ENCODE measurements at regions of chr13 and their contacts with region 1.

Region 1: GRCh38 chr13:97809576-97809975 is 143.9 kb upstream of the IPO5 start:
- DNase-seq: no peak
- ATAC-seq: no peak
- H3K4me3 ChIP-seq: no peak overlapping the region
- H3K27ac ChIP-seq: no peak overlapping the region
- H3K4me1 ChIP-seq: peaks cover 0 to 8% of the 10 kb centered on the region in 2 experiments; a peak in 2 of 4 replicates
- H3K27me3 ChIP-seq: no peaks in the 10 kb centered on the region
- CTCF ChIP-seq: no peak
- POLR2A ChIP-seq: no peak
- RAD21 ChIP-seq: no peak

Region 2: DNA sequence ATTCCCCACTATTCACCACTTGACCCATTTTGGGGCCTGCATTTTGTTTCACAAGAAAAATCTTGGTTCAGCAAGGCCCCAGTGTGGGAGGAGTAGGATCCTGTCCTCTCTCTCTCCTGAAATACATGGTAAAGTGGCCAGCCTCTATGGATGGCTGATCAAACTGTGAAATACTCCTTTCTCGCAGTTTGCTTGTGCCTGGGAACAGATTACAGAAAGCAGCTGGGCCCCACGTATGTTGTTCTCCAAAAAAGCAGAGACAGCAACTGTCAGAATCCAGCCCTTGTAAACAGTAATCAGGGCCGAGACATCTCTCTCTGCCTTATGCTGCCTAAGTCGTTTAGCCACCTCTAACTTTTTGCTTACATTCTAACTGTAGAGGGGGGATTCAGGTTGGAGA is 436.6 kb before region 1 on chr13:
- CTCF ChIA-PET with region 1: no interaction called
- POLR2A ChIA-PET with region 1: no interaction called
- RAD21 ChIA-PET with region 1: no interaction called
- intact Hi-C with region 1: loop called (anchors 10 kb)
- DNase-seq: no peak
- ATAC-seq: no peak
- H3K4me3 ChIP-seq: no peak overlapping the region
- H3K27ac ChIP-seq: no peak overlapping the region
- H3K4me1 ChIP-seq: no peaks in the 10 kb centered on the region
- H3K27me3 ChIP-seq: no peaks in the 10 kb centered on the region
- CTCF ChIP-seq: no peak
- POLR2A ChIP-seq: no peak
- RAD21 ChIP-seq: no peak

Region 3: DNA sequence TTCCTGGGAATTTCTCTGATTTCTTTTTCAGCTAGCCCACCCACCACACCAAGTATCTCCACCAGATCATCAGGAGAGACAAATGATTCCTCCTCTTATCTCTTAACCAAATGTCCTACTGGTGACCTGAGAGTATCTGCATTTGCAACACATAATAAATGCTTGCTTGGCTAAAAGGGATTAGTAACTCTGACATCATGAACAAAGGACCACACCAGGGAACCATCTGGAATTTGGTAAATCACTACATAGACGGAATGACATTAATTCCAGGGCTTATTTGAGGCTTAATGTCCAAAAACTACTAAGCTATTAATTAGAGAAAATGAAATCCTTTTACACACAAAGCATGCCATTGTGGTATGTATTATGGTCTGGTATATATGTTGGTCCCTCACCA is 236.6 kb before region 1 on chr13:
- CTCF ChIA-PET with region 1: no interaction called
- POLR2A ChIA-PET with region 1: no interaction called
- RAD21 ChIA-PET with region 1: no interaction called
- intact Hi-C with region 1: no loop called
- DNase-seq: no peak
- ATAC-seq: no peak
- H3K4me3 ChIP-seq: no peak overlapping the region
- H3K27ac ChIP-seq: no peak overlapping the region
- H3K4me1 ChIP-seq: peaks cover 13 to 14% of the 10 kb centered on the region in 2 experiments
- H3K27me3 ChIP-seq: no peaks in the 10 kb centered on the region
- CTCF ChIP-seq: no peak
- POLR2A ChIP-seq: no peak
- RAD21 ChIP-seq: no peak

Region 4: DNA sequence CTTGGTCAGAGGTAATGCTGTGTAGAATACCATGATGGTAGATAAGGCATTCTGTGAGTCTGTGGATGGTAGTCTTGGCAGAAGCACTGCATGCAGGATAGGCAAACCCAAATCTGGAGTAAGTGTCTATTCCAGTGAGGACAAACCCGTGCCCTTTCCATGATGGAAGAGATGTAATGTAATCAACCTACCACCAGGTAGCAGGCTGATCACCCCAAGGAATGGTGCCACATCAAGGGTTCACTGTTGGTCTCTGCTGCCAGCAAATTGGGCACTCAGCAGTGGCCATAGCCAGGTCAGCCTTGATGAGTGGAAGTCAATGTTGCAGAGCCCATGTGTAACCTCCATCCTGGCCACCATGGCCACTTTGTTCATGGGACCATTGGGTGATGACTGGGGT is 220.6 kb before region 1 on chr13:
- CTCF ChIA-PET with region 1: no interaction called
- POLR2A ChIA-PET with region 1: no interaction called
- RAD21 ChIA-PET with region 1: no interaction called
- intact Hi-C with region 1: loop called (anchors 10 kb)
- DNase-seq: no peak
- ATAC-seq: 0 out of 2 replicates have a peak, but pooled peaks have one; percentile 40
- H3K4me3 ChIP-seq: no peak overlapping the region
- H3K27ac ChIP-seq: no peak overlapping the region
- H3K4me1 ChIP-seq: no peaks in the 10 kb centered on the region
- H3K27me3 ChIP-seq: no peaks in the 10 kb centered on the region
- CTCF ChIP-seq: peak in 2 of 3 experiments; percentile 7 to 12; a peak in 2 of 6 replicates
- POLR2A ChIP-seq: no peak
- RAD21 ChIP-seq: peak; percentile 29; the same call in 1 of the 2 replicates

Region 5: GRCh38 chr13:97986835-97987234 is 177.3 kb after region 1 on chr13:
- CTCF ChIA-PET with region 1: no interaction called
- POLR2A ChIA-PET with region 1: no interaction called
- RAD21 ChIA-PET with region 1: no interaction called
- intact Hi-C with region 1: no loop called
- DNase-seq: no peak
- ATAC-seq: no peak
- H3K4me3 ChIP-seq: no peak overlapping the region
- H3K27ac ChIP-seq: no peak overlapping the region
- H3K4me1 ChIP-seq: no peaks in the 10 kb centered on the region
- H3K27me3 ChIP-seq: no peaks in the 10 kb centered on the region
- CTCF ChIP-seq: no peak
- POLR2A ChIP-seq: no peak
- RAD21 ChIP-seq: no peak

Region 6: DNA sequence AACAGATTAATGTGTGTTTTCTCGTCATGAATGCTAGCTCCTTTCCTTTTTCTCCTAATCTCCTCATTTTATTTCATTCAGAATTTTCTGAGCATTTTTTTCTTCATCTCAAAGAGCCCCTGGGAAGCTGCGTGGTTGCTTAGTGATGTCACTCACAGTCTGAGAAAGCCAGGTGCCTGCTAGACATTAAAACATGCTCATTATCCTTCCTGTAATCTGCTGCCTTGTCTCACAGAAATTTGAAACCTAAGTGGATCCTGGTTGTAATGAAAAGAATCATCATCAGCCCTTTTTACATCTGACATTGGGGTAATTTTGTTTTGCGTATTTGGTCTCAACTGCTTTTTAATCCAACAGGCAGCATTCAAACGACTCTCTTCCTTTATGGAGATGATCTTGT is 475.7 kb after region 1 on chr13:
- CTCF ChIA-PET with region 1: no interaction called
- POLR2A ChIA-PET with region 1: no interaction called
- RAD21 ChIA-PET with region 1: no interaction called
- intact Hi-C with region 1: no loop called
- DNase-seq: no peak
- ATAC-seq: no peak
- H3K4me3 ChIP-seq: no peak overlapping the region
- H3K27ac ChIP-seq: no peak overlapping the region
- H3K4me1 ChIP-seq: no peaks in the 10 kb centered on the region
- H3K27me3 ChIP-seq: no peaks in the 10 kb centered on the region
- CTCF ChIP-seq: no peak
- POLR2A ChIP-seq: no peak
- RAD21 ChIP-seq: no peak